Naive thymus-derived CD4-positive, alpha-beta T cell (primary cell): ENCODE measurements at regions of chr7 and their contacts with region 1.

Region 1: GRCh38 chr7:150466477-150466876 is 16.0 kb downstream of the GIMAP8 start:
- DNase-seq: no peak
- ATAC-seq: no peak
- H3K4me3 ChIP-seq: no peak overlapping the region
- H3K4me3 Mint-ChIP-seq: peak overlapping the region in 7 of 10 donors; percentile 46 to 91 (median 61)
- H3K27ac ChIP-seq: peak overlapping the region; percentile 34
- H3K27ac Mint-ChIP-seq: peak overlapping the region in 7 of 9 donors; percentile 70 to 97 (median 86)
- H3K4me1 ChIP-seq: peaks cover 50 to 60% of the 10 kb centered on the region in 2 donors
- H3K4me1 Mint-ChIP-seq: peaks cover 61 to 98% (median 95%) of the 10 kb centered on the region in 7 donors
- H3K27me3 ChIP-seq: no peaks in the 10 kb centered on the region
- H3K27me3 Mint-ChIP-seq: no peaks in the 10 kb centered on the region

Region 2: GRCh38 chr7:149460493-149461277 is 1005.8 kb before region 1 on chr7 and contains the start of gene ZNF777:
- CTCF ChIA-PET with region 1: no interaction called
- POLR2A ChIA-PET with region 1: no interaction called
- intact Hi-C with region 1: no loop called
- DNase-seq: peak; percentile 65 to 84 (median 80)
- ATAC-seq: peak; percentile 99
- H3K4me3 ChIP-seq: peak within 1 kb of the TSS; percentile 80
- H3K4me3 Mint-ChIP-seq: peak within 1 kb of the TSS; percentile 78 to 91 (median 87)
- H3K27ac ChIP-seq: peak within 1 kb of the TSS; percentile 72
- H3K27ac Mint-ChIP-seq: peak within 1 kb of the TSS; percentile 28 to 89 (median 76)
- H3K4me1 ChIP-seq: peaks cover 4 to 16% of the 10 kb centered on the region in 2 donors
- H3K4me1 Mint-ChIP-seq: peaks cover 13 to 46% (median 35%) of the 10 kb centered on the region in 7 donors
- H3K27me3 ChIP-seq: no peaks in the 10 kb centered on the region
- H3K27me3 Mint-ChIP-seq: peaks cover 4 to 29% (median 10%) of the 10 kb centered on the region in 5 donors
- total RNA-seq, gene ZNF777: 11.2 to 16.1 (median 14.3) TPM

Region 3: GRCh38 chr7:150453892-150454291 is 12.6 kb before region 1 on chr7:
- CTCF ChIA-PET with region 1: interaction called, 3 read pairs
- POLR2A ChIA-PET with region 1: interaction called, 580 read pairs
- intact Hi-C with region 1: loop called (anchors 1 to 2 kb)
- DNase-seq: peak in 1 of 9 donors; percentile 12
- ATAC-seq: no peak
- H3K4me3 ChIP-seq: peak overlapping the region; percentile 55
- H3K4me3 Mint-ChIP-seq: peak overlapping the region; percentile 87 to 99 (median 97)
- H3K27ac ChIP-seq: peak overlapping the region; percentile 84
- H3K27ac Mint-ChIP-seq: peak overlapping the region; percentile 60 to 99 (median 95)
- H3K4me1 ChIP-seq: peaks cover 27 to 41% of the 10 kb centered on the region in 2 donors
- H3K4me1 Mint-ChIP-seq: peaks cover 45 to 75% (median 70%) of the 10 kb centered on the region in 7 donors
- H3K27me3 ChIP-seq: no peaks in the 10 kb centered on the region
- H3K27me3 Mint-ChIP-seq: no peaks in the 10 kb centered on the region

Region 4: GRCh38 chr7:150481186-150481920 is 14.9 kb after region 1 on chr7:
- CTCF ChIA-PET with region 1: interaction called, 8 read pairs
- POLR2A ChIA-PET with region 1: interaction called, 132 read pairs
- intact Hi-C with region 1: loop called in 1 of 2 experiments (anchors 1 kb)
- DNase-seq: peak in 8 of 9 donors; percentile 46 to 81 (median 71)
- ATAC-seq: peak; percentile 68
- H3K4me3 ChIP-seq: peak overlapping the region; percentile 12
- H3K4me3 Mint-ChIP-seq: peak overlapping the region; percentile 79 to 97 (median 90)
- H3K27ac ChIP-seq: peak overlapping the region; percentile 95
- H3K27ac Mint-ChIP-seq: peak overlapping the region; percentile 97 to 100 (median 100)
- H3K4me1 ChIP-seq: peaks cover 84 to 89% of the 10 kb centered on the region in 2 donors
- H3K4me1 Mint-ChIP-seq: peaks cover 58 to 99% (median 92%) of the 10 kb centered on the region in 7 donors
- H3K27me3 ChIP-seq: no peaks in the 10 kb centered on the region
- H3K27me3 Mint-ChIP-seq: no peaks in the 10 kb centered on the region

Region 5: GRCh38 chr7:150489782-150490181 is 23.3 kb after region 1 on chr7:
- CTCF ChIA-PET with region 1: no interaction called
- POLR2A ChIA-PET with region 1: interaction called, 11 read pairs
- intact Hi-C with region 1: no loop called
- DNase-seq: no peak
- ATAC-seq: peak; percentile 60
- H3K4me3 ChIP-seq: no peak overlapping the region
- H3K4me3 Mint-ChIP-seq: peak overlapping the region in 1 of 10 donors; percentile 43
- H3K27ac ChIP-seq: no peak overlapping the region
- H3K27ac Mint-ChIP-seq: peak overlapping the region in 4 of 9 donors; percentile 5 to 99 (median 70)
- H3K4me1 ChIP-seq: peaks cover 12 to 28% of the 10 kb centered on the region in 2 donors
- H3K4me1 Mint-ChIP-seq: peaks cover 22 to 84% (median 76%) of the 10 kb centered on the region in 7 donors
- H3K27me3 ChIP-seq: no peaks in the 10 kb centered on the region
- H3K27me3 Mint-ChIP-seq: no peaks in the 10 kb centered on the region